ENCODE measurements at regions of chr11 and their contacts with region 1.

Region 1: DNA sequence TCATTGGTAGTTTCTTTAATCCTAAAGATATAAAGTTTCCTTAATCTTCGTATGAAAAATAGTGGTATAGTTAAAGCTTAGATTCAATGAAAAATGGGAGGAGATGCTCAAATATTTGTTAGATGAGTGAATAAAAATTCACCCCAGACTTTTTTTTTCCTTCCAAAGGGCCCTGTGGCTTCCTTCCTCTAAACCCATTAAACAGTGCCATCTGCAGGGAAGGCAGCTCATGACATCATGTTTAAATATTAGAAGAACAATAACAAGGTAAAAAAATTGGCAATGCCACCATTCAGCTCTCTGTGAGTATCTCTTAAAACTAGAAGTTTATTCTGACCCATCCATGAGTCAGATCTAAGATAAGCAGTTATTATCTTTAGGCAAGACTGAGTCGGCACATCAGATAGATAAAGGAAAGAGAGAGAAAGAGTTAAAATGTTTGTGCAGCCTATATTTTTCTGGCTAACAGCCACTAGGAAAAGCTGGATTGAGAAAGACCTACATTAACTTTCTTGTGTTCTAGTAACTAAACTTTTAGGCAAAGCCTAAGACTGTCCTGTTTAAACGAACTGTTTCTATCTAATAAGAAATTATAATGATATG is 19.1 kb upstream of the OOSP1 start:
- DNase-seq: peak; percentile 46 to 60
- H3K4me3 ChIP-seq: no peak overlapping the region
- H3K27ac ChIP-seq: no peak overlapping the region
- H3K4me1 ChIP-seq: no peaks in the 10 kb centered on the region
- H3K27me3 ChIP-seq: no peaks in the 10 kb centered on the region
- CTCF ChIP-seq: peak; percentile 78

Region 2: DNA sequence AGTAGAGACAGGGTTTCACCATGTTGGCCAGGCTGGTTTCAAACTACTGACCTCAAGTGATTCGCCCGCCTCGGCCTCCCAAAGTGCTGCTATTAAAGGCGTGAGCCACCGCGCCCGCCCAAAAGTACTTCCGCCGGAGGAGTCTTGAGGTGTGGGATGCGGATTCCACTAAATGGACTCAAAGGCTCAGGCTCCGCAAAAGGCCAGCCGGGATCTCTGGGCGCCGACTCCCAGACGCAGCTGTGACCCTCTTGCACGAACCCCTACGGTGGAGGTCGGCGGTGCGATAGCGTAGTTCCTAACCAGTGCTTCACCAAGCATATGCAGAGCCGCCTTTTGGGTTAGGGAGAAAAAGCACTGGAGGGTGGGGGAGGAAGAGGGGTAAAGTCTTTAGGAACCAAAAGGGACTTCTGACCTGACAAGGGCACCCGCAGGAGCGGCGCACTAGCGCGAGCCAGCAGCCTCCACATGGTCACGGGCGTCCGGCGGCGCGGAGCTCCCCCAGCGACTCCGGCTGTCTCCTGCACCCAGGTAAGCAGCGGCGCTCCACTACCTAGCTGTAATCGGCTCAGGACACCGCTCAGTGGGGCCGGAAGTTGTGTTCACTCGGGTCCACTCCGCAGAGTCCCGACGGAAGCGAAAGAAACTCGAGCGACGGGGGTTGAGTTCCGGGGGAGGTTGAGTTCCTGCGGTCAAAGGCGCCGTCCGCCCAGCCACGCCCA is 108.7 kb before region 1 on chr11 and contains the start of gene MRPL16:
- CTCF ChIA-PET with region 1: interaction called, 4 read pairs
- POLR2A ChIA-PET with region 1: interaction called, 15 read pairs
- intact Hi-C with region 1: no loop called
- DNase-seq: peak; percentile 89 to 92
- H3K4me3 ChIP-seq: peak within 1 kb of the TSS; percentile 73
- H3K27ac ChIP-seq: peak within 1 kb of the TSS; percentile 58
- H3K4me1 ChIP-seq: peaks cover 14% of the 10 kb centered on the region; the same call in 1 of the 2 replicates
- H3K27me3 ChIP-seq: no peaks in the 10 kb centered on the region
- CTCF ChIP-seq: peak; percentile 57; the same call in 1 of the 2 replicates
- total RNA-seq, gene MRPL16: 64.7 and 82.0 TPM in 2 replicates

Region 3: GRCh38 chr11:59944720-59945119 is 25.6 kb after region 1 on chr11:
- CTCF ChIA-PET with region 1: no interaction called
- POLR2A ChIA-PET with region 1: no interaction called
- intact Hi-C with region 1: no loop called
- DNase-seq: no peak
- H3K4me3 ChIP-seq: no peak overlapping the region
- H3K27ac ChIP-seq: no peak overlapping the region
- H3K4me1 ChIP-seq: no peaks in the 10 kb centered on the region
- H3K27me3 ChIP-seq: peaks cover 28% of the 10 kb centered on the region; the same call in 1 of the 2 replicates
- CTCF ChIP-seq: no peak

Region 4: GRCh38 chr11:60193687-60194433 is 274.8 kb after region 1 on chr11:
- CTCF ChIA-PET with region 1: no interaction called
- POLR2A ChIA-PET with region 1: no interaction called
- intact Hi-C with region 1: loop called (anchors 5 kb)
- DNase-seq: peak; percentile 43 to 51
- H3K4me3 ChIP-seq: no peak overlapping the region
- H3K27ac ChIP-seq: no peak overlapping the region
- H3K4me1 ChIP-seq: no peaks in the 10 kb centered on the region
- H3K27me3 ChIP-seq: no peaks in the 10 kb centered on the region
- CTCF ChIP-seq: peak; percentile 91

Measured in PC-9 (cell line).